Left ventricle myocardium superior (tissue), 1 donor: ENCODE measurements at regions of chrX and their contacts with region 1.

Region 1: GRCh38 chrX:130079824-130080406 is 30.4 kb downstream of the ELF4 start:
- DNase-seq: peak; percentile 43
- ATAC-seq: peak; percentile 74

Region 2: DNA sequence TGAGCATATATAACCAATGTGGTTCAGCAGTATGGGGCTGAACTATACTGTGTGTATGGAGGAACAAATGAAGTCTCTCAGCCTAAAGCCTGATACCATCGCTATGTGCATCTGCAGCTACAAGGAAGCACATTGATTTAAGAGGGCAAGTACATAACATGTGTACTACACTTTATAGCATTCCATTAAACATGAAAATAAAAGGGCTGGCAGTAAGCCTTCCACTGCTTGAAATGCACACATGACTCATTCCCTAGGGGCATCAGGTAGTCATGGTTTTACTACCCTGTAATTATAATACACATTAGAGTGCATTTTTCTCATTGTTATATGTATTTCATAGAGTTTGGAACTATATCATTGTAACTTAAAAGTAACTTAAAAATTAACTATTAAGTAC is 607.8 kb before region 1 on chrX:
- intact Hi-C with region 1: no loop called
- DNase-seq: no peak
- ATAC-seq: no peak

Region 3: DNA sequence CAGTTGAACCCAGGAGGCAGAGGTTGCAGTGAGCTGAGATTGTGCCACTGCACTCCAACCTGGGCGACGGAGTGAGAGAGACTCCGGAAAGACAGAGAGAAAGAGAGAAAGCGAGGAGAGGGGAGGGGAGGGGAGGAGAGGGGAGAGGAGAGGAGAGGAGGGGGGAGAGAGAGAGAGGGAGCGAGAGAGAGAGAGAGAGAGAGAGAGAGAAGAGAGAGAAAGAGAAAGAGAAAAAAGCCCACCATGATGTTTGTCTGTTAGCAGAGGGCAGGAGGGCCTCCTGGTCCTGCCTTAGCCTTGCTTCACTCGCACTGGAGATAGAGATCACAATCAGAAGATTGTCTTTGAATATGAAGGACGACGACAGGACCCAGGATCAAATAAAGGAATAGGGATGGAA is 116.2 kb before region 1 on chrX:
- intact Hi-C with region 1: no loop called
- DNase-seq: no peak
- ATAC-seq: no peak

Region 4: DNA sequence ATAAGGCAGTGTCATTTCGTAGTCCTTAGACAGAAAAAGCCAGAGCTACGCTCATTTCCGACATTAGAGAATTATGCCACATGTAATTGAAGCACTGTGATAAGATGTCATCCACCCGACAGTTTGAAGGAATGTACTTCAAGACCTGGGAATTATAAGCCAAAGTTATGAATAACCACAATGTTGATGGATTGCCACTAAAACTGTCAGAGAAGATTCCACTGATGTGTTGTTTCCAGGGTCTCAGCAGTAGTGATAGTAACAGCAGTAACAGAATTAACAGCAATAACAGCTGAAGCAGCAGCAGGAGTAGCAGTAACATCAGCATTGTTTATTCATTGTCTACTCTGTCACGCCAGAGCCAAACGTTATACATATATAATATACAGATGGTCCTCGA is 116.6 kb after region 1 on chrX:
- intact Hi-C with region 1: loop called (anchors 10 kb)
- DNase-seq: no peak
- ATAC-seq: no peak